ENCODE measurements at regions of chr1 and their contacts with region 1.

Region 1: GRCh38 chr1:239719642-239720258 is 333.4 kb downstream of the CHRM3 start:
- DNase-seq: peak; percentile 89
- H3K4me3 Mint-ChIP-seq: no peak overlapping the region
- H3K27ac Mint-ChIP-seq: peak overlapping the region; percentile 98
- H3K4me1 Mint-ChIP-seq: peaks cover 33% of the 10 kb centered on the region
- H3K27me3 Mint-ChIP-seq: no peaks in the 10 kb centered on the region

Region 2: DNA sequence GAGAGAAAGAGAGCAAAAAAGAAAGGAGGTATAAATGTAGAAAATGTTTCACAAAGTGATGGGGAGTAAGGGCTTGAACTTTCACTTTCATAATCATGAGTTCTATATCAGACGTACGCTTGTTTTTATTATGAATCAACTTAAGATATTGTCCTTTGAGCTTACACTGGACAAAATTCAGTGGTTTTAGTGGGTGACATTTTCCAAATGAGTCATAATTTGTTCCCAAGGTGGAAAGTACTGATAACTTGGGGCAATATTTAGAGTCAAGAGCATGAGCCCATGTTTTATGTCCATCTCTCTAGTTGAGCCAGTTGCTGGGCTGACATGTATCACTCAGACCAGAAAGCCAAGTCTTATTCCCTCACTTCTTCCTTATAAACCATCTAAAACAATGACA is 171.8 kb before region 1 on chr1:
- intact Hi-C with region 1: loop called (anchors 1 kb)
- DNase-seq: no peak
- H3K4me3 Mint-ChIP-seq: peak overlapping the region; percentile 59
- H3K27ac Mint-ChIP-seq: peak overlapping the region; percentile 32
- H3K4me1 Mint-ChIP-seq: peaks cover 12% of the 10 kb centered on the region
- H3K27me3 Mint-ChIP-seq: no peaks in the 10 kb centered on the region

Region 3: DNA sequence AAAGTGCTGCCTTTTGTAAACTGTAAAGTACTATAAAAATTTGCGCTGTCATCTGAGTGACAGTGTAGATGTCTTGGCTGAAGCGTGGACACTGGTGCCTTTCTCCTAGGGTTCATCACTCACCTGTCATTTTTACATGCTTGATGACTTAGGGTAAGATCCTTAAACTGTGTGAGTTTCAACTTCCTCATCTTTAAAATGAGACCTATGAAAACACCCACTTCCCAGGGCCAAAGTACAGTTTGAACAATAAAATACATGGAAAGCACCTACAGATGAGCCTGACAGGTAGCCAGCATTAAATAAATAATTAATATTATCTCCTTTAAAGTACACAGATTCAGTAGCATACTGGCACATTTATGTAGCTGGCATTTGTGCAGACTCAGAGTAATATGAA is 23.4 kb before region 1 on chr1:
- intact Hi-C with region 1: no loop called
- DNase-seq: no peak
- H3K4me3 Mint-ChIP-seq: no peak overlapping the region
- H3K27ac Mint-ChIP-seq: no peak overlapping the region
- H3K4me1 Mint-ChIP-seq: no peaks in the 10 kb centered on the region
- H3K27me3 Mint-ChIP-seq: no peaks in the 10 kb centered on the region

Region 4: DNA sequence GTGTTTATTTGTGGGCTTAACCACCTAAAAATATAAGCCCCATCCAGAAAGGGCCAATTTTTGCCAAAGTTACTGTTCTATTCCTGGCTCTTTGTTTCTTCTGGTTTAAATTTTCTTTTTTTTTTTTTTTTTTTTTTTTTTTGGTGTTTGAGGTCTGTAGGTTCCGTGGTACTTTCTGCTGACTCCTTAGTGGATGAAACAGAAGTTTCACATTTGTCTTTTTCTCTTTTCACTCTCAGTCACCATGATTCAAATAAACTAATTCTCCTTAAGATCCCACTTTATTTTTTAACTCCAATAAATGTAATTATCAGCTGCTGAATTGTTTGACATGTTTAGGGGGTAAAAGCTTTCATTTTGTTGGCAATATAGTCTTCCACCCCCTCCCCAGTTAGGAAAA is 11.1 kb before region 1 on chr1:
- intact Hi-C with region 1: loop called (anchors 1 kb)
- DNase-seq: no peak
- H3K4me3 Mint-ChIP-seq: peak overlapping the region; percentile 14
- H3K27ac Mint-ChIP-seq: peak overlapping the region; percentile 3
- H3K4me1 Mint-ChIP-seq: peaks cover 19% of the 10 kb centered on the region
- H3K27me3 Mint-ChIP-seq: no peaks in the 10 kb centered on the region

Region 5: GRCh38 chr1:239814303-239814881 is 94.6 kb after region 1 on chr1:
- intact Hi-C with region 1: loop called (anchors 2 kb)
- DNase-seq: peak; percentile 58
- H3K4me3 Mint-ChIP-seq: no peak overlapping the region
- H3K27ac Mint-ChIP-seq: peak overlapping the region; percentile 62
- H3K4me1 Mint-ChIP-seq: peaks cover 19% of the 10 kb centered on the region
- H3K27me3 Mint-ChIP-seq: no peaks in the 10 kb centered on the region